Activated T-helper 2 cell treated with anti-CD3 and anti-CD28 coated beads, Interferon-gamma antibody, Interleukin-2, Interleukin-4, amounts not matched to agents 10 μg/mL and 5 μg/mL and 100 μg/mL, durations not matched to agents 14 hours and 24 hours and 36 hours (primary cell): ENCODE measurements at regions of chr6 and their contacts with region 1.

Region 1: DNA sequence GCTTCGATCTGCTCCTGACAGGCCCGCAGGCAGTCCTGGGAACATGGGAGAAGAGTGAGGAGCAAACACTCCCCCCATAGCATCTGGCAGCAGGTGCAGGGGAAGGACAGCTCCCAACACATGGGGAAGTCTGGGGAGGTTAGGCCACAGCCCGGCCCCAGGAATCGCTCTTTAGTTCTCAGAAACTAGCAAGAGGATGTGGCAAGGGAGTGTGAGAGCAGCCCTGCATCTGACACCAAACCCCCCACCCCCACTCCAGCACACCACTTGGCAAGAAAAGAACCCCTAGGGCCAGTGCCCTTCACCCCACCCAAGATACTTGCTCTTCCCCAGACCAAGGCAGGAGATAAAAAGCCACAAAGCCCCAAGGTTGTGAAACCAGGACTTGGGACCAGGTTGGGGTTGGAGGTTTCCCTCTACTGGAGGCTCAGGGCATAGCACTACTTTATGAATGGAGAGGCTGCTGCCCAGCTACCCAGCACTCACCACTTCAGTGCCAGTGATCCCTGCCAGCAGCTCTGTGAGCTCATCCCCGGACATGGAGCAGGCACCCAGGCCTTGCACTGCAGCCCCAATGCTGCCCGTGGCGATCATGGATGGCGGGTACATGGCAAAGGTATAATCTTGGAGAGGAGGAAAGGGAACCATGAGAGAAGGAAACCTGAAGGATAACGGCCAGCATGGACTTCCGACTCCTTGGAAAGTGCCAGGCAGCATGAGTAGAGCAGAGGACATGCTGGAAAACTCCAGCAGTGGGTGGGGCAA is 5.4 kb downstream of the CCND3 start:
- DNase-seq: peak; percentile 89
- H3K4me3 Mint-ChIP-seq: peak overlapping the region; percentile 86
- H3K27ac Mint-ChIP-seq: peak overlapping the region; percentile 83
- H3K4me1 Mint-ChIP-seq: peaks cover 67% of the 10 kb centered on the region
- H3K27me3 Mint-ChIP-seq: no peaks in the 10 kb centered on the region

Region 2: DNA sequence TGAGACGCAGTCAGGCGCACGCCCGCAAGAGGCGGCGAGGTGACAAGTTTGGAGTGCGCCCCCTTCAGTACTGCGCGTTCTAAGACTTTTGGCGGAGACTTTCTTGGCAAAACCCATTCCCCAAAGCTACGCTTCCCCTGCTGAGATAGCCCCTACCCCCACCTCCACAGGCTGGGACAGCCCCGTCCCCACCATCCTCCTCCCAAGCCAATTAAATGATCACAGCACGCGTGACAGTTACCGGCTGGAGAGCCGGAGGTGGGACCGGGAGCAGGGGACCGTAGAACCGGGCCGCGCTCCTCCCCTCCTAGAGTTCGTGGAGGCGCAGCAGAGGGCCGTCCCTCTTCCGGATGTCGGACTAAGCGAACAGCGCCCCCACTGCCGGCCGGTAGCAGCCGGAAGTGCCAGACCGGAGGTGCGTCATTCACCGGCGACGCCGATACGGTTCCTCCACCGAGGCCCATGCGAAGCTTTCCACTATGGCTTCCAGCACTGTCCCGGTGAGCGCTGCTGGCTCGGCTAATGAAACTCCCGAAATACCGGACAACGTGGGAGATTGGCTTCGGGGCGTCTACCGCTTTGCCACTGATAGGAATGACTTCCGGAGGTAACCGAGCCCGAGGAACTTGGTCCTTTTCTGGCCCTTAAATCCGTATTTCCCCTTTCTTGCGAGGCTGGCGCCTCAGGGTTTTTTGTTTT is 148.9 kb before region 1 on chr6 and contains the start of gene TOMM6:
- intact Hi-C with region 1: loop called (anchors 1 kb)
- DNase-seq: peak; percentile 95
- H3K4me3 Mint-ChIP-seq: peak within 1 kb of the TSS; percentile 96
- H3K27ac Mint-ChIP-seq: peak within 1 kb of the TSS; percentile 97
- H3K4me1 Mint-ChIP-seq: peaks cover 15% of the 10 kb centered on the region
- H3K27me3 Mint-ChIP-seq: peaks cover 3% of the 10 kb centered on the region
- total RNA-seq, gene TOMM6: 308 and 316 TPM in 2 replicates

Region 3: GRCh38 chr6:41895300-41896233 is 40.7 kb before region 1 on chr6 and contains the start of gene USP49:
- intact Hi-C with region 1: loop called (anchors 2 kb)
- DNase-seq: peak; percentile 86
- H3K4me3 Mint-ChIP-seq: no peak within 1 kb of the TSS
- H3K27ac Mint-ChIP-seq: peak within 1 kb of the TSS; percentile 88
- H3K4me1 Mint-ChIP-seq: peaks cover 8% of the 10 kb centered on the region
- H3K27me3 Mint-ChIP-seq: no peaks in the 10 kb centered on the region
- total RNA-seq, gene USP49: 6.1 and 6.4 TPM in 2 replicates

Region 4: GRCh38 chr6:41920921-41921711 is 15.1 kb before region 1 on chr6 and contains the starts of genes BYSL and MED20:
- intact Hi-C with region 1: loop called (anchors 1 kb)
- DNase-seq: peak; percentile 90
- H3K4me3 Mint-ChIP-seq: peak within 1 kb of the TSS; percentile 97
- H3K27ac Mint-ChIP-seq: peak within 1 kb of the TSS; percentile 98
- H3K4me1 Mint-ChIP-seq: peaks cover 45% of the 10 kb centered on the region
- H3K27me3 Mint-ChIP-seq: no peaks in the 10 kb centered on the region
- total RNA-seq, gene BYSL: 58.2 and 60.5 TPM in 2 replicates
- total RNA-seq, gene MED20: 23.7 and 24.3 TPM in 2 replicates

Region 5: GRCh38 chr6:41970436-41970846 is 34.2 kb after region 1 on chr6:
- intact Hi-C with region 1: loop called (anchors 2 kb)
- DNase-seq: no peak
- H3K4me3 Mint-ChIP-seq: peak overlapping the region; percentile 14
- H3K27ac Mint-ChIP-seq: peak overlapping the region; percentile 93
- H3K4me1 Mint-ChIP-seq: peaks cover 29% of the 10 kb centered on the region
- H3K27me3 Mint-ChIP-seq: no peaks in the 10 kb centered on the region